Mucosa of descending colon (tissue), 3 donors: ENCODE measurements at regions of chr7 and their contacts with region 1.

Region 1: GRCh38 chr7:47266131-47266706 is 315.7 kb downstream of the TNS3 start:
- DNase-seq: peak in 2 of 3 donors; percentile 76 to 77
- ATAC-seq: peak; percentile 91
- H3K4me3 ChIP-seq: no peak overlapping the region
- H3K4me1 ChIP-seq: peaks cover 12% of the 10 kb centered on the region
- CTCF ChIP-seq: peak; percentile 74

Region 2: GRCh38 chr7:46775776-46776175 is 490.4 kb before region 1 on chr7:
- intact Hi-C with region 1: no loop called
- DNase-seq: no peak
- ATAC-seq: no peak
- H3K4me3 ChIP-seq: no peak overlapping the region
- H3K4me1 ChIP-seq: no peaks in the 10 kb centered on the region
- CTCF ChIP-seq: no peak

Region 3: DNA sequence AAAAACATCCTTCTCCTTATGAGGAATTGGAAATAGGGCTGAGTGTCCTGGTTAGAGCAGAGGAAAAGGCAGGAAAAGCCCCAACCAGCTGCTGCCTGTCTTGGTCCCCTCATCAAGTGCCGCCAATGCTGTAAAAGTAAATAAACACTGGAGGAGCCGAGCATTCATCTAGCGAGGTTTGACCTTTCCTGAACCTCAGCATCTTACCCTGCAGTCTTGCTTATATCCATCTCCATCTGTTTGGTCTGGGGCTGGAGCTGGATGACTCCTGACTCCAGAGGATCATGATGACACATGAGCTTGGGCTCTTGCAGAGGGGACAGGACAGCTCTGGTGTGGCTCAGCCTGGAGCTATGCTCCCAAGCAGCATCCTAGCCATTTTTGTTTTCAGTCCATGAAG is 185.4 kb before region 1 on chr7:
- intact Hi-C with region 1: no loop called
- DNase-seq: peak in 1 of 3 donors; percentile 18
- ATAC-seq: peak; percentile 10
- H3K4me3 ChIP-seq: no peak overlapping the region
- H3K4me1 ChIP-seq: no peaks in the 10 kb centered on the region
- CTCF ChIP-seq: no peak

Region 4: GRCh38 chr7:47435889-47436312 is 169.7 kb after region 1 on chr7:
- intact Hi-C with region 1: loop called in 1 of 2 experiments (anchors 5 kb)
- DNase-seq: peak in 2 of 3 donors; percentile 74 to 83
- ATAC-seq: peak; percentile 86
- H3K4me3 ChIP-seq: no peak overlapping the region
- H3K4me1 ChIP-seq: no peaks in the 10 kb centered on the region
- CTCF ChIP-seq: peak; percentile 57